ENCODE measurements at regions of chrX and their contacts with region 1.

Region 1: GRCh38 chrX:101931488-101932248 is at the start of gene ZMAT1:
- DNase-seq: peak; percentile 98
- ATAC-seq: peak; percentile 96
- H3K4me3 ChIP-seq: peak within 1 kb of the TSS; percentile 28 to 56
- H3K27ac ChIP-seq: peak within 1 kb of the TSS; percentile 79 to 85
- H3K4me1 ChIP-seq: no peaks in the 10 kb centered on the region
- H3K27me3 ChIP-seq: no peaks in the 10 kb centered on the region
- total RNA-seq, gene ZMAT1: 9.0 to 14.8 TPM

Region 2: GRCh38 chrX:102659790-102660757 is 728.4 kb after region 1 on chrX:
- intact Hi-C with region 1: loop called in 1 of 2 experiments (anchors 10 kb)
- DNase-seq: peak; percentile 92 to 94
- ATAC-seq: peak; percentile 90
- H3K4me3 ChIP-seq: peak overlapping the region; percentile 8 to 60
- H3K27ac ChIP-seq: peak overlapping the region in 1 of 2 donors; percentile 33
- H3K4me1 ChIP-seq: no peaks in the 10 kb centered on the region
- H3K27me3 ChIP-seq: no peaks in the 10 kb centered on the region